ENCODE measurements at regions of chr2 and their contacts with region 1.

Region 1: GRCh38 chr2:182186132-182186735 is 200.6 kb downstream of the PPP1R1C start:
- DNase-seq: no peak
- H3K4me3 ChIP-seq: no peak overlapping the region
- H3K27ac ChIP-seq: no peak overlapping the region
- H3K27me3 ChIP-seq: no peaks in the 10 kb centered on the region
- CTCF ChIP-seq: peak; percentile 34

Region 2: DNA sequence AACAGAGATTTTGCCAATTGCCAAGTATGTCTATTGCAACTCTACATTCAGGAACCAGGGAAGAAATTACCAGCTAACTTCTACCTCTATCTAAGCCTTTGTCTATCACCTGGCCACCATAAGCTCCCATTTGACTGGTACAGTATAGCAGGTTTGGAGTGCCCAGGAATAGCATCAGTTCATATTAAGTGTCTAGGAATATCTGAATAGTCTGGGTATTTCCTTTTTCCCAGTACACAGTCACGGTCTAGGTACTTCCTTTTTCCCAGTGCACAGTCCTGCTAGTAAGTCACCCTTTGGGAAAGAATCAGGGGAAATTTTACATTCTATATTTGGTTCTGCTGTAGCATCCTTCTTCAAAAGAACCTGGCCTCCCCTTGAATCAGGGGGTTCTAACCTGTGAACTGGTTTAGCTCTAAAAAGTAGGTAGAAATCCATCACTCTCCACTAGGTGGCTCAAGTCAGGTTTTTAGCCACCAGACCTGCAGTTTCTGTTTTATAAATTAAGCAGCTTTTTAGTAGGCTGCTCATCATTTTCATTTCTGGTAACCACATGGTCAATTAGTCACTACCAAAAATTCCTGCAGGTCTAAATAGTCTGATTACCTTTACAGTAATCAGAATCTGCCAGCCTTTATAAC is 480.6 kb after region 1 on chr2:
- in situ Hi-C with region 1: loop called (anchors 25 kb)
- DNase-seq: peak; percentile 37
- H3K4me3 ChIP-seq: no peak overlapping the region
- H3K27ac ChIP-seq: no peak overlapping the region
- H3K27me3 ChIP-seq: no peaks in the 10 kb centered on the region
- CTCF ChIP-seq: peak; percentile 70

Measured in brain microvascular endothelial cell (primary cell).